Caco-2 (cell line): ENCODE measurements at regions of chr19 and their contacts with region 1.

Region 1: DNA sequence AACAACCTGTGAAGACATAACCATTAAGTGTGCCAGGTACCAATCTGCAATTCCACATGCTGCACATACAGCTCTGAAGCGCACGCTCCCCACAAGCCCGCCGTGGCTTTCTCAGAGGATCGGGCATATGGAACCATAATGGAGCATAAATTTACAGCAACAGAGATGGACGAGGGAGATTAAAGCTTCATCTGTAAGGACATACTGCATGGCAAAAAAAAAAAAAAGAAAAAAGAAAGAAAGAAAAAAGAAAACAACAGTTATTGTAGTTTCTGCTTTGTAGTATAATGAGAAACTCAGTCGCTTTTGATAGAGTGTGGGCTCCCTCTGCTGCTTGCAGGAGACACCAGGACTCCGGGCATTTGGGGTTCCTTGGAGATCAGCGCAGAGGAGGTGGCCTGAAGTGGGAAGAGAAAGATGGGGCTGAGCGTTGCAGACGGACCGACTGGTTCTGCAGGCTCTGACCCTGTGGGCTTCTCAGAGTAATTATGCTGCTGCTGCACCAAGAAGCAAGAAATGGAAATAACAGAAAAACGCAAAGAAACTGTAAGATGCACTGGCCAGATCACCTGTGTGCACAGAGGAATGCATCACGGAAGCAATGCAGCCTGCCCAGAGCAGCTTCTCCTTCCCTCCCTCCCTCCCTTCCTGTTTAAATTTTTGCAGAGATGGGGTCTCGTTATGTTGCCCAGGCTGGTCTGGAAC is 10.8 kb upstream of the PDCD5 start:
- DNase-seq: peak; percentile 68 to 75
- H3K4me3 ChIP-seq: no peak overlapping the region
- H3K4me3 Mint-ChIP-seq: peak overlapping the region; percentile 36
- H3K27ac Mint-ChIP-seq: no peak overlapping the region
- H3K4me1 ChIP-seq: no peaks in the 10 kb centered on the region
- H3K4me1 Mint-ChIP-seq: no peaks in the 10 kb centered on the region
- H3K27me3 ChIP-seq: no peaks in the 10 kb centered on the region; the same call in 1 of the 2 replicates
- H3K27me3 Mint-ChIP-seq: peaks cover 3% of the 10 kb centered on the region
- CTCF ChIP-seq: peak; percentile 79 to 89

Region 2: DNA sequence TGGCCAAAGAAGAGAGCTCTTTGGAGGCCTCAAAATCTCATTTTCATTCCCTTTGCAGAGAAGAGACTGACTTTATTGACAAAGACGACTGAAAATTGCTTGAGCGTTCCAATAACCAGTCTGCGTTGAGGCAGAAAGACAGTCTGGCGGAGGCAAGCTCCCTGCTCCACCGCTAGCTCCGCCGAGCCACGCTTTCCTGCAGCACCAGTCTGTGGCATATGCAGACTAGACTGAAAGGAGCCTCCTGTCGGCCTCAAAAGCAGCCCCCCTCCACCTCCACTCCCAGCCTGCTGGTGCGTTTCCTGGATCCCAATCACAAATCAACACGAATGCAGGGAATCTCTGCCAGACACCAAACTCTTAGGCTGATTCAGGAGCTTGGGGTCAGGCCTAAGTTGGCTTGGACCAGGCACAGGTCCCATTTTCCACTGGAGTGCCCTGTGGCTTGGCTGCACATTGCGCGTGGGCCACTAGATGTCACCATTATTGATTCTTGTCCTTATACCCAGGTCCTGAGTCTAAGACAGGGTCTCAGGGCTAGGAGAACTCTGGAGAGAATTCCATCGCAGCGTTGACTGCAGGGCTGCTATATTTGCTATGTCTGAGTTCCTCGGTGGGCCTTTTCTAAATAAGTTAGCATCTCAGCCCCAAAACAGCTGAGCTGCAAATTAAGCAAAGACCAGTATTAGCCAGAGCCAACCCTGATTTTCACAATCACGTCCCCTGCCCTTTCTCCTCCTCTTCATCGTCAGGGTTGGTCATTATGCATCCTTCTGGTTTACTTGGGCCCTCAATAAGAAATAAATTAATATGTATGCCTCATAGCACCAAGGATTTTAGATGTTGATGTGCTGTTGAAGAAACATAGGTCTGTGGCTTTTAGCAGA is 230.0 kb before region 1 on chr19:
- CTCF ChIA-PET with region 1: interaction called, 15 read pairs
- POLR2A ChIA-PET with region 1: no interaction called
- intact Hi-C with region 1: loop called (anchors 1 kb)
- DNase-seq: peak; percentile 74 to 76
- H3K4me3 ChIP-seq: no peak overlapping the region
- H3K4me3 Mint-ChIP-seq: no peak overlapping the region
- H3K27ac Mint-ChIP-seq: no peak overlapping the region
- H3K4me1 ChIP-seq: 0 out of 2 replicates have a peak, but pooled peaks cover 3% of the 10 kb centered on the region
- H3K4me1 Mint-ChIP-seq: no peaks in the 10 kb centered on the region
- H3K27me3 ChIP-seq: no peaks in the 10 kb centered on the region
- H3K27me3 Mint-ChIP-seq: no peaks in the 10 kb centered on the region
- CTCF ChIP-seq: peak; percentile 68 to 76

Region 3: GRCh38 chr19:32464279-32464678 is 106.0 kb before region 1 on chr19:
- CTCF ChIA-PET with region 1: interaction called, 3 read pairs
- POLR2A ChIA-PET with region 1: no interaction called
- intact Hi-C with region 1: loop called (anchors 1 kb)
- DNase-seq: no peak
- H3K4me3 ChIP-seq: no peak overlapping the region
- H3K4me3 Mint-ChIP-seq: no peak overlapping the region
- H3K27ac Mint-ChIP-seq: no peak overlapping the region
- H3K4me1 ChIP-seq: no peaks in the 10 kb centered on the region
- H3K4me1 Mint-ChIP-seq: no peaks in the 10 kb centered on the region
- H3K27me3 ChIP-seq: no peaks in the 10 kb centered on the region
- H3K27me3 Mint-ChIP-seq: no peaks in the 10 kb centered on the region
- CTCF ChIP-seq: peak; percentile 26 to 27